H1 (cell line): ENCODE measurements at regions of chr1 and their contacts with region 1.

Region 1: DNA sequence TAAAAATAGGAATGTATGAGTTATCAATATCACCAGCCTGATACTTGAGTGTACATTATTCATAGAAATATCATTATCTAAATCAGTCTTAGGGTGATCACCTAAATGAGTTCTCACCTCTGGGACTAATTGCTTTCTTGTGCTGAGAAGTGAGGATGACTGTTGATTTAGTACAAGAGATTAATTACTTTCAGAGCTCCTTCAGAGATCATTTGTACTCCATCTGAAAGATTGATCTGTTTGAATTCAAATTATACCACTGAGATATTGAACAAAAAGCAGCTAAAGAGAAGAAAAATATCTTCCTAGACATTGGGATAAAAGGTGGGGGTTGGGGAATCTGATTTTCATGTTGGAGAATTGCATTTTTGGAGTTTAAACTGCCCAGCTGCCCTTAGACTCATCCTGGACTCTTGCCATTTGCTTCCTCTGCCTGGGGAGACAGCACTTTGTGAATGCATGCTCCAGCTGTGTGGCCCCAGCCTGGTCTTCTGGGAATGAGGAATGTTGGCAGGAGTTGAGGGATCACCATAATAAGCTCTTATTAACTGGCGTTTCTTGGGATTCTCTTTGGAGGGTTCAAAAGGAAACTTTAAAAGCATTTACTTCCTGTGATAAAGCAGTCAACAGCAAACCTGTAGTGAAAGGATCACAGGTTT is 19.7 kb upstream of the PGBD2 start:
- DNase-seq: no peak
- H3K4me3 ChIP-seq: no peak overlapping the region
- H3K27ac ChIP-seq: no peak overlapping the region
- H3K4me1 ChIP-seq: peaks cover 0 to 2% (median 0%) of the 10 kb centered on the region in 4 experiments; a peak in 1 of 7 replicates
- H3K27me3 ChIP-seq: no peaks in the 10 kb centered on the region
- CTCF ChIP-seq: no peak
- EP300 ChIP-seq: no peak
- POLR2A ChIP-seq: no peak
- RAD21 ChIP-seq: no peak

Region 2: DNA sequence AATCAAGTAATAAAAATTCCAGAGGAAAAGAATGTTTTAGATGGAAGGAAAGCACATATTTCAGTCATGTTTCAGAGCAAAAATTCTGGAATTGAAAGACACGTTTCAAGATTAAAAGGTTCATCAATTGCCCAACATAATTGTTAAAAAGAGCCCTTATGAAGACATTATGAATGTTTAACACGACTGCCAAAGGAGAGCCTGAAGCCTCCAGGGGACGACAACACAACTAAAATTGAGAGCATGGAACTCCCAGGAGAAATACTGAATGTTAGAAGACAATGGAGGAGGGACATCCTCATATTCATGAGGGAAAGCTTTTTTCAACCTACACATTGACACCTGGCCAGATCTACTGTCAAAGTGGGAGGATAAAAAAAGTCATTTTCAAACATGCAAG is 267.5 kb before region 1 on chr1:
- CTCF ChIA-PET with region 1: no interaction called
- POLR2A ChIA-PET with region 1: no interaction called
- DNase-seq: no peak
- H3K4me3 ChIP-seq: no peak overlapping the region
- H3K27ac ChIP-seq: no peak overlapping the region
- H3K4me1 ChIP-seq: no peaks in the 10 kb centered on the region
- H3K27me3 ChIP-seq: no peaks in the 10 kb centered on the region
- CTCF ChIP-seq: no peak
- EP300 ChIP-seq: no peak
- POLR2A ChIP-seq: no peak
- RAD21 ChIP-seq: peak in 1 of 2 experiments; percentile 23; a peak in 1 of 4 replicates

Region 3: GRCh38 chr1:248739572-248740205 is 146.7 kb before region 1 on chr1:
- CTCF ChIA-PET with region 1: no interaction called
- POLR2A ChIA-PET with region 1: no interaction called
- DNase-seq: no peak
- H3K4me3 ChIP-seq: no peak overlapping the region
- H3K27ac ChIP-seq: no peak overlapping the region
- H3K4me1 ChIP-seq: no peaks in the 10 kb centered on the region
- H3K27me3 ChIP-seq: no peaks in the 10 kb centered on the region
- CTCF ChIP-seq: no peak
- EP300 ChIP-seq: no peak
- POLR2A ChIP-seq: no peak
- RAD21 ChIP-seq: no peak

Region 4: GRCh38 chr1:248779350-248779749 is 107.0 kb before region 1 on chr1:
- CTCF ChIA-PET with region 1: no interaction called
- POLR2A ChIA-PET with region 1: no interaction called
- DNase-seq: no peak
- H3K4me3 ChIP-seq: no peak overlapping the region
- H3K27ac ChIP-seq: no peak overlapping the region
- H3K4me1 ChIP-seq: no peaks in the 10 kb centered on the region
- H3K27me3 ChIP-seq: no peaks in the 10 kb centered on the region
- CTCF ChIP-seq: no peak
- EP300 ChIP-seq: no peak
- POLR2A ChIP-seq: no peak
- RAD21 ChIP-seq: no peak

Region 5: GRCh38 chr1:248873409-248873992 is 12.9 kb before region 1 on chr1:
- CTCF ChIA-PET with region 1: interaction called, 29 read pairs
- POLR2A ChIA-PET with region 1: interaction called, 9 read pairs
- DNase-seq: peak; percentile 93 to 100
- H3K4me3 ChIP-seq: peak overlapping the region; percentile 85 to 94 (median 90)
- H3K27ac ChIP-seq: peak overlapping the region; percentile 62; the same call in 1 of the 2 replicates
- H3K4me1 ChIP-seq: peaks cover 0 to 2% (median 0%) of the 10 kb centered on the region in 4 experiments; a peak in 1 of 7 replicates
- H3K27me3 ChIP-seq: no peaks in the 10 kb centered on the region
- CTCF ChIP-seq: no peak
- EP300 ChIP-seq: no peak
- POLR2A ChIP-seq: no peak
- RAD21 ChIP-seq: peak in 1 of 2 experiments; percentile 1; a peak in 1 of 4 replicates

Region 6: GRCh38 chr1:248906009-248906752 is 19.8 kb after region 1 on chr1 and contains the start of gene PGBD2:
- CTCF ChIA-PET with region 1: interaction called, 6 read pairs
- POLR2A ChIA-PET with region 1: interaction called, 10 read pairs
- DNase-seq: peak; percentile 81 to 99
- H3K4me3 ChIP-seq: peak within 1 kb of the TSS; percentile 52 to 82 (median 76)
- H3K27ac ChIP-seq: peak within 1 kb of the TSS; percentile 99
- H3K4me1 ChIP-seq: peaks cover 0 to 8% (median 3%) of the 10 kb centered on the region in 4 experiments; a peak in 3 of 7 replicates
- H3K27me3 ChIP-seq: no peaks in the 10 kb centered on the region
- CTCF ChIP-seq: peak; percentile 74 to 88 (median 75)
- EP300 ChIP-seq: peak; percentile 9 to 59; a peak in 2 of 3 replicates
- POLR2A ChIP-seq: peak; percentile 94 to 98
- RAD21 ChIP-seq: peak; percentile 52 to 58; a peak in 3 of 4 replicates
- total RNA-seq, gene PGBD2: 7.7 and 7.8 TPM in 2 replicates